BJ (cell line): ENCODE measurements at regions of chr10 and their contacts with region 1.

Region 1: DNA sequence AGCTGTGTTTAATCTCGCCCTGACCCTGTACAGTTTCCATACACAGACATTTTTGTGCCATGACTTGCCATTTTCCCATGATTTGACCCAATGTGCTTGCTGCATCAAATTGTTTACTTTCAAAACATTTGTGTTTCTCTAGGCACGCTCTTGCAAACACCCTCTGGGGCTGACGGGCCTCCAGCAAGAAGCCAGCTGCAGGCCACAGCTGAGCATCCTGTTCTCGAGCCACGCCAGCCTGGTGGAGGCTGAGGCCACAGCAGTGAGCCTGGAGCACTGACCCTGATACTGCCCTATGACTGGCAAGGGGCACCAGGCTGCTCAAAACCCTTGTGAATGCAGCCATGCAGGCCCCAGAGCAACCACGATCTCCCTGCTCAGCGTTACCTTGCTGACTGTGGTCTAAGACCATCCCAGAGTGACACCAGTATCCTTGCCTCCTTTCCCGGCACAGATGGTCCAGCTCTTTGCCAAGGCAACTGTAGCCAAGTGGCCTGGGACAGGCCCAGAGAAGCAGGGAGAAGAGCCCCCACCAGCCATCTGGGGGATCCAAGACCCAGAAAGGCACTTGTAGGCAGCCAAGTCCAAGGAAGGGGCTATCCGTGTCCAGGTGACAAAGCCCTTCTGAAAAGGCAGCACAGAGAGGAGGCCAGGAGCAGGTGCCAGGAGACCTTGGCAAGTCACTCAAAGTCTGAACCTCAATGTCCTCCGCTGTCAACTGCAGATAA is 78.5 kb downstream of the OAT start:
- DNase-seq: peak; percentile 97
- H3K4me3 ChIP-seq: no peak overlapping the region
- H3K27me3 ChIP-seq: no peaks in the 10 kb centered on the region
- CTCF ChIP-seq: 0 out of 2 replicates have a peak, but pooled peaks have one; percentile 11

Region 2: DNA sequence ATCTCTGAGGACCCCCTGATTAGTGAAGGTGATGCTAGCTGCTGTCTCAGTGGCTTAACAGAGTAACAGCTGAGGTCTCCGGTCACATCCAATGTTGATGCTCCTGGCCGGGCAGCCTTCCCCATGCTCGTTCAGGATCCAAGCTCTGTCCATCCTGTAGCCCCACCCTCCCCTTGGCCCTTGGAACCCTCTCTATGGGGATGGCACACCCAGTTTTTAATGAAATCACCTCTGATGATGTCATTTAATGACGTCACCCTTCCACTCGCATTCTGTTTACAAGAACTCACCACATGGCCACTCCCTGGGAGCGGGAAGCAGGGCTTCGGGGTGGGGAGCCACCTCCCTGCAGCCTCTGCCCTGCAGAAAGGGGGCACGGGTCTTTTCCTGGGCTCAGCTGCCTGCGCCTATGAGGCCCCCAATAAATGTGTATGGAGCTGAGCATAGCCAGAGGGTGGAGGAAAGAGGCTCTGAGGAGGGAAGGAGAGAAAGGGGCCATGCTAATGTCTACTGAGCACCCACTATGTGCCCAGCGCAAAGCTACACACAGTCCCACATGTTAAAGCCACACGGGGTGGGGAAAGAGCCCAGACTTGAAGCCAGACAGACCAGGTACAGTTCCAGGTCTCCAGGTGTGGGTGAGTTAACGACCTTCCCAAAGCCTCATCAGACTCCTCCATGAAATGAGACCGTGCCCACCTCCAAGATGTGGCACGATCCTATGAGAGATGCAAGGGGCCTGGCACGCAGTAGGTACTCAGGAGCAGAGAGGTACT is 16.9 kb before region 1 on chr10:
- CTCF ChIA-PET with region 1: no interaction called
- POLR2A ChIA-PET with region 1: interaction called, 16 read pairs
- DNase-seq: no peak
- H3K4me3 ChIP-seq: no peak overlapping the region
- H3K27me3 ChIP-seq: no peaks in the 10 kb centered on the region; the same call in 1 of the 2 replicates
- CTCF ChIP-seq: no peak

Region 3: GRCh38 chr10:125457406-125457805 is 1117.2 kb after region 1 on chr10:
- CTCF ChIA-PET with region 1: no interaction called
- POLR2A ChIA-PET with region 1: interaction called, 16 read pairs
- DNase-seq: no peak
- H3K4me3 ChIP-seq: no peak overlapping the region
- H3K27me3 ChIP-seq: no peaks in the 10 kb centered on the region; the same call in 1 of the 2 replicates
- CTCF ChIP-seq: no peak